Posterior cingulate gyrus (tissue), 11 donors: ENCODE measurements at regions of chr7 and their contacts with region 1.

Region 1: DNA sequence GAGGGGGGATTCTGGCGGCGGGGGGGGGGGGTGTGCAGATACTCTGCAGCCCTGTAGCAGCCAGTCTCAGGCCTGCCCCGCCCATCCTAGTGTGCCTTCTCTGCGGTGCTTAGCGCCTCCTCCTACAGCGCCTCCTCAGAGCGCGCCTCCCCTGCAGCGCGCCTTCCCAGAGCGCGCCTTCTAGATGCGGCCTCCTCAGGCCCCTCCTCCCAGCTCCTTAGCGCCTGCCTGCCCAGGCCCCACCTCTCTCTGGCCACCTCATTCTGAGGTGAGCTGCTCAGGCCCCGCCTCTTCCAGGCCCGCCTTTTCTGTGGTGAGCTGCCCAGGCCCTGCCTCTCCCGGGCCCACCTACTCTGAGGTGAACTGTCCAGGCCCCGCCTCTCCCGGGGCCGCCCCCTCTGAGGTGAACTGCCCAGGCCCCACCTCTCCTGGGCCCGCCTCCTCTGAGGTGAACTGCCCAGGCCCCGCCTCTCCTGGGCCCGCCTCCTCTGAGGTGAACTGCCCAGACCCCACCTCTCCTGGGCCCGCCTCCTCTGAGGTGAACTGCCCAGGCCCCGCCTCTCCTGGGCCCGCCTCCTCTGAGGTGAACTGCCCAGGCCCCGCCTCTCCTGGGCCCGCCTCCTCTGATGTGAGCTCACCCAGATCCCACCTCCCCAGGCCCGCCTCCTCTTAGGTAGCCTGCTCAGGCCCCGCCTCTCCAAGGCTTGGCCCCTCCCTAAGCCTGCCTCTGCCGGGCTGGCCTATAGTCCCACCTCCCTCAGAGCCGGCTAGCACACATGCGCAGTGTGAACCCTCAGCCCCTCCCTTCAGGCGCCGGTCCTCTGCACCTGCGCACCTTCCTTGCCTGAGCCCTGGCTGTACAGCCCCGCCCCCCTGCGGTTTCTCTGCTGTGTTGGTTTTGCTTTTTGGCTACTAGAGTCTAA is 2.1 kb upstream of the SGCE start:
- DNase-seq: peak; percentile 79 to 99 (median 90)

Region 2: DNA sequence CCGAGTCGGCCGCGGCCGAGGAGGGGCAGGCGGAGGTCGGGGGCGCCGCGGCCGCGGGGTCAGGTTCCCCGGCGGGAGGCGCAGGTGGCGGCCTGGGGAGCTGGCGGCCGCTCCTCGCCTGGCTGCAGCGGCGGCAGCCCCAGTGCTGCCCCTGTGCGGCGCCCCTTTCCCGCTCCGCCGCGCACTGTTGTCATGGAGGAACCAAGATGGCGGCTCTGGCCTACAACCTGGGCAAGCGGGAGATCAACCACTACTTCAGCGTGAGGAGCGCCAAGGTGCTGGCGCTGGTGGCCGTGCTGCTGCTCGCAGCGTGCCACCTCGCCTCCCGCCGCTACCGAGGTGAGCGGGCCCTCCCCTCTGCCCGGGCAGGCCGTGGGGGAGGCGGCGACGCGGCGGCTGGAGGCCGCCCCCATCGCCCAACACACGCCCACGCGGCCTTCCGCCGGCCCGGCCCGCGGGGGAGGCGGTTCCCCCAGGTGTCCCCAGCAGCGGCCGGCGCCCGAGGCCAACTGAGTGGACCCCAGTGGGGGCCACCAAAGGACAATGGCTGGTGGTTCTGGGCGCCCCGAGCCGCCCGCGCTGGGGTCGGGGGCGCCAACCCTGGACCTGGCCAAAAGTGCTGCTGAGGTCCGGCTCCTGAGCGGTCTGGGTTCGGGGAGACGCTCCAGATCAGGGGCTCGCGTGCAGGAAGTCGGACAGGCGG is 148.0 kb before region 1 on chr7:
- intact Hi-C with region 1: loop called (anchors 2 kb)
- DNase-seq: peak; percentile 59 to 95 (median 70)

Region 3: GRCh38 chr7:94907026-94907810 is 249.2 kb after region 1 on chr7 and contains the start of gene PPP1R9A:
- intact Hi-C with region 1: loop called (anchors 5 kb)
- DNase-seq: peak; percentile 40 to 94 (median 61)

Region 4: GRCh38 chr7:95045236-95045923 is 387.3 kb after region 1 on chr7:
- intact Hi-C with region 1: loop called (anchors 10 kb)
- DNase-seq: peak in 6 of 10 donors; percentile 17 to 92 (median 56)

Region 5: DNA sequence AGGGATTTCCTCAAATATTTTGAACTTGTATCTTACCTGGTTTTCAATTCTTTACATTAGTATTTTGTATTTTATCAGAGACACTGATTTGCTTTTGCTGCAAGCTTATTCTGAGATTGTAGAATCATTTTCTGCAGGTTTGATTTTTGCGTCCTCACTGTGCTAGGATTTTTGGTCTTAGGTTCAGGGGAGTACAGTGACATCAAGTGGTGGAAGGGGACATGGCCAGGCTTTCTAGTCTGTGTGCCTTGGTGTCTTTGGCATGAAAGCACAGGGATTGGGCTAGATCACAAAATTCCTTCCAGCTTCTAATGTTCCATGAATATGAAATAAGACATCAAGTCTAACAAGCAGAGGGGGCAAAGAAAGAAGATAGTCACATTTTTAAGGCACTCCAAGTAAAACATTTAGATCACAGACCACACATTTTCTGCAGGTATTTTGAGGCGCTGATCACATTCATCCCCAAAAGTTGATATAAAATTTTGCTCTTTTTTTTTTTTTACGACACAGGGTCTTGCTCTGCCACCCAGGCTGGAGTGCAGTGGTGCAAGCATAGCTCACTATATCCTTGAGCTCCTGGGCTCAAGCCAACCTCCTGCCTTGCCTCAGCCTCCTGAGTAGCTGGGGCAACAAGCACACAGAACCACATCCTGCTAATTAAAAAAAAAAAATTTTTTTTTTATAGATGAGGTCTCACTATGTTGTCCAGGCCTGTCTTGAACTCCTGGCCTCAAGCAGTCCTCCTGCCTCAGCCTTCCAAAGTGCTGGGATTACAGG is 541.9 kb after region 1 on chr7:
- intact Hi-C with region 1: loop called (anchors 5 kb)
- DNase-seq: peak in 8 of 10 donors; percentile 31 to 91 (median 55)